ENCODE measurements at regions of chr11 and their contacts with region 1.

Region 1: DNA sequence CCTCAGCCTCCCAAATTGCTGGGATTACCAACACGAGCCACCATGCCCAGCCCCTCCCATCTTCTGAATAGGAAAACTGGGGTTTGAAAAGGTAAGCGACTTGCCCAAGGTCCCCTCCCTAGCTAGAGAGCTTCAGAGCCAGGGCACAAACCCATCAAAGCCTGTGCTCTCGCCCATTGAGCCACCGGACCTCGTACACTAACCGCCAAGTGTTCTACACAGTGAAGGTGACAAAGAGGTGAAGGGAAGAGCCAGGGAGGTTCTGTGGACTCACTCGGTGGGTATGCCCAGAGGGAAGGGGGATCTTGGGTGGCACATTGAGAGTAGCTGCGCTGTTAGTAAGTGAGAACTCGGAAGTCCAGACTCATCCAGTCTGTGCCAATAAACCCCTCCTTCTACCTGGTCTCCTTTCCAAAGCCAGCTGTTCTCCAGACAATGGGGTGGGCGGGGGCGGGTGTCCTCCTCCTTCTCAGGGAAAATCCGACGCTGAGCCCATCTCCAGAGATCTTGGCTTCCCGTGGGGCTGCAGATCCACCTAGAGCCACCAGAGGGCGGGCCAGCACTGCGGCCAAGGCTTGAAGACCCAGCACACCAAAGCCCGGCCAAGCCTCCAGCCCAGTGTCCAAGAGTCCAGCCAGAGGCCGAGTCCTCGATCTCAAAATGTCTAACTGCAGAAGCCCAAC is 3.2 kb upstream of the RTN4RL2 start:
- DNase-seq: peak; percentile 65
- H3K4me3 Mint-ChIP-seq: peak overlapping the region; percentile 72
- H3K27ac Mint-ChIP-seq: no peak overlapping the region
- H3K4me1 Mint-ChIP-seq: peaks cover 36% of the 10 kb centered on the region
- H3K27me3 Mint-ChIP-seq: peaks cover 53% of the 10 kb centered on the region

Region 2: GRCh38 chr11:57480409-57481137 is 23.5 kb after region 1 on chr11:
- intact Hi-C with region 1: loop called (anchors 1 kb)
- DNase-seq: peak; percentile 62
- H3K4me3 Mint-ChIP-seq: no peak overlapping the region
- H3K27ac Mint-ChIP-seq: no peak overlapping the region
- H3K4me1 Mint-ChIP-seq: peaks cover 12% of the 10 kb centered on the region
- H3K27me3 Mint-ChIP-seq: peaks cover 49% of the 10 kb centered on the region

Region 3: GRCh38 chr11:57515332-57516060 is 58.4 kb after region 1 on chr11 and contains the start of gene SLC43A1:
- intact Hi-C with region 1: loop called (anchors 5 kb)
- DNase-seq: peak; percentile 9
- H3K4me3 Mint-ChIP-seq: peak within 1 kb of the TSS; percentile 99
- H3K27ac Mint-ChIP-seq: peak within 1 kb of the TSS; percentile 94
- H3K4me1 Mint-ChIP-seq: peaks cover 17% of the 10 kb centered on the region
- H3K27me3 Mint-ChIP-seq: peaks cover 4% of the 10 kb centered on the region
- total RNA-seq, gene SLC43A1: 29.1 and 30.3 TPM in 2 replicates

Region 4: DNA sequence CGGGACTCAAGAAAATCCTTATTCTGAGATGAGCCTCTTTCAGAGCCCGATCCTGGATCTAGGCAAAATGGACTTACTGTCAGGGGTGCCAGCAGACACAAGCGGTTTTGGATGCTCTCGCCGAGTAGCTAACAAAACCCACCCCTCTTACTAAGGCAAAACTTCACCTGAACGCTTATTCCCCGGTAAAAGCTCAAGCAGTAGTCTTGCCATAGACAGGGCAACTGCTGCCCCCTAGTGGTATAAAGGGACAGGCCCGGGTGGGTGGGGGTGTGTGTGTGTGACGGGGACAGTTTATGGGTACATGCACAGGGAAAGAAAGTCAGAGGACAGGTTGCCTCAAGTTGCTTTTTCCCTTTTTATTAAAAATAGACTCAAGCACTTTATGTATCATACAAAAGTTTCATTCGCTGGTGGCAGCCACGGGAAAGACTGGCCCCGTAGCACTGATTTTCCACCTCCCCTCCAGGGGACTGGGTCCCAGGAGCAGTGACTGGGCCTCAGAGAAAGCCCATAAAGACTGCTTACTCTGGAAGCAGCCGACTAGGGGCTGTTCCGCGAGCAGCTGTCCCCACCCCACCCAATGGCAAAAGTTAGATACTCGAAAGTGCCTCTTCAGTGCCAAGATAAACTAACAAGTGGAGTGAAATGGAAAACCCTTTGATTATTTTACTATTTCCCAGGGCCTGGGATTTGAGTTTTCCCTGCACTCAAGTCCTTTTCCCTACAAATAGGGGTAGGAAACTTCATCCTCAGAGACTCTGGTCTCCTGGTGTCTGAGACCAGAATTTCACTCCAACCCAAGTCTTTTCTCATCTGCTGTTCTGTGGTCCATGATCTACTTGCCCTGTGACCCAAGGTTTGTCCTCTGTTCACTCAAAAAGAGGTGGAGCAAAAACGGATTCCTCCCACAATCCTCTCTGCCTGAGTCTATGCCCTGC is 187.9 kb after region 1 on chr11:
- intact Hi-C with region 1: loop called (anchors 1 kb)
- DNase-seq: peak; percentile 77
- H3K4me3 Mint-ChIP-seq: no peak overlapping the region
- H3K27ac Mint-ChIP-seq: no peak overlapping the region
- H3K4me1 Mint-ChIP-seq: peaks cover 48% of the 10 kb centered on the region
- H3K27me3 Mint-ChIP-seq: peaks cover 39% of the 10 kb centered on the region

Measured in activated T-helper 1 cell treated with anti-CD3 and anti-CD28 coated beads, Interleukin-12 subunit alpha, Interleukin-12 subunit beta, Interleukin-2, Interleukin-4 antibody, amounts not matched to agents 30 ng/mL and 10 ng/mL and 1 ng/mL, durations not matched to agents 14 hours and 24 hours and 36 hours (primary cell).